ENCODE measurements at regions of chr15 and their contacts with region 1.

Region 1: GRCh38 chr15:82992436-82992998 is 6.5 kb downstream of the RAMAC start:
- DNase-seq: no peak
- ATAC-seq: no peak
- H3K4me3 ChIP-seq: no peak overlapping the region
- H3K27ac ChIP-seq: no peak overlapping the region
- H3K4me1 ChIP-seq: peaks cover 1% of the 10 kb centered on the region
- H3K27me3 ChIP-seq: no peaks in the 10 kb centered on the region
- CTCF ChIP-seq: no peak

Region 2: GRCh38 chr15:82613747-82614146 is 378.8 kb before region 1 on chr15:
- intact Hi-C with region 1: no loop called
- DNase-seq: no peak
- ATAC-seq: peak; percentile 26
- H3K4me3 ChIP-seq: no peak overlapping the region
- H3K27ac ChIP-seq: no peak overlapping the region
- H3K4me1 ChIP-seq: no peaks in the 10 kb centered on the region
- H3K27me3 ChIP-seq: no peaks in the 10 kb centered on the region
- CTCF ChIP-seq: no peak

Region 3: DNA sequence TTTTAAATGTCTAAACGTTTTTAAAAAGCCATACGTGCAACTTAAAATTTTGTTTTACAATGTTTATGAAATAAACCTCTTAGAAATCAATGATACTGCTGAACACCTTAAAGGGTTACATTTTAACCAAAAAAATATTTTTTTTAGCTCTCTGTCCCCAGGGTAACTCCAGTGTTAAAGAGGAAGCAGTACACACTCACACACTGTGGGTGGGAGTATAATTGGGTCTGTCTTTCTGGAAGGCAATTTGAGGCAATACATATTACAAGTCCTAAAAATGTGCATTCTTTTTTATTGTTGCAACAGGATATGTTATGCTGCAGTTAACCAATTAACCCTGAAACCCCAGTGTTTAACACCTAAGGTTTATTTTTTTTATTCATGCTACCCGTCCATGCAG is 149.0 kb before region 1 on chr15:
- intact Hi-C with region 1: loop called (anchors 5 kb)
- DNase-seq: no peak
- ATAC-seq: no peak
- H3K4me3 ChIP-seq: no peak overlapping the region
- H3K27ac ChIP-seq: no peak overlapping the region
- H3K4me1 ChIP-seq: no peaks in the 10 kb centered on the region
- H3K27me3 ChIP-seq: no peaks in the 10 kb centered on the region
- CTCF ChIP-seq: no peak

Region 4: DNA sequence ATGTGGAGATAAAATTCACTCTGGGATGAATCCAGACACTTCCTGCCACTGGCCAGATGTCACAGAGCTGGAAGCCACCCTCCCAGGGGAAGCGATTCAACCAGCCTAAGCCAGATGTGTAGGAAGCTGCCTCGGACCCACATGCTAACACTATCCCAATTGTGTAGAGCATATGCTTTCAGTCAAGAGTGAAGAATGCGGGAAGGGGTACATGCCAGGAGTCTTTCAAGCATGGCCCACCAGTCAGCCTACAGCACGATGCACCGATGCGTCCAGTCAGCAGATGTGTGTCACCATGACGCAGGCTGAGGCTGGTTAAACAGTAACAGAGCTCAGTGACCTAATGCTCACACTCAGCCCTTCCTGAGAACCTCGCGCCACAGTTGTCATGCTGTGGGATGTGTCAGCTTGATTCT is 330.8 kb after region 1 on chr15:
- intact Hi-C with region 1: no loop called
- DNase-seq: no peak
- ATAC-seq: peak; percentile 26
- H3K4me3 ChIP-seq: no peak overlapping the region
- H3K27ac ChIP-seq: no peak overlapping the region
- H3K4me1 ChIP-seq: no peaks in the 10 kb centered on the region
- H3K27me3 ChIP-seq: peaks cover 9% of the 10 kb centered on the region
- CTCF ChIP-seq: no peak

Measured in upper lobe of right lung (tissue), 1 donor.